Transverse colon (tissue), 4 donors: ENCODE measurements at regions of chr1 and their contacts with region 1.

Region 1: DNA sequence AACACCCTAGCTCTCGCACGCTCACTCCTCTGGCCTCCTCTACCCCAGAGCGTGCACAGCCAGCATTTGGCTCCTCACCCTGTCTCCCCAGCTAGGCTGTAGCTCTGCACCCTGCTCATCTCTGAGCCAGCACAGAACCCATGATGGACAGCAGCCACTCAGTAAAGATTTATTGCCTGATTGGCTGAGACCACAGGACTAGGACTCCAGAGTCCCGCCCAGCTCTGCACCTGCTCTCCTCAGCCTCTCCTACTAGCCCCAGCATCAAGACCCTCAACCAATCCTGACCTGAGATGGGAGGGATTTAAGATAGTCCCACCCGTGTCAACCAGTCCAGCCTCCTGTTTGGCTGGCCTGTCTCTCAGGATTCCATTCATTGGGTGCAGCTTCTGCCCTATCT is 9.3 kb downstream of the C1QB start:
- DNase-seq: peak; percentile 22
- H3K4me3 ChIP-seq: no peak overlapping the region
- H3K27ac ChIP-seq: no peak overlapping the region
- H3K4me1 ChIP-seq: no peaks in the 10 kb centered on the region
- H3K27me3 ChIP-seq: peaks cover 2% of the 10 kb centered on the region
- CTCF ChIP-seq: no peak
- EP300 ChIP-seq: no peak
- POLR2A ChIP-seq: no peak

Region 2: DNA sequence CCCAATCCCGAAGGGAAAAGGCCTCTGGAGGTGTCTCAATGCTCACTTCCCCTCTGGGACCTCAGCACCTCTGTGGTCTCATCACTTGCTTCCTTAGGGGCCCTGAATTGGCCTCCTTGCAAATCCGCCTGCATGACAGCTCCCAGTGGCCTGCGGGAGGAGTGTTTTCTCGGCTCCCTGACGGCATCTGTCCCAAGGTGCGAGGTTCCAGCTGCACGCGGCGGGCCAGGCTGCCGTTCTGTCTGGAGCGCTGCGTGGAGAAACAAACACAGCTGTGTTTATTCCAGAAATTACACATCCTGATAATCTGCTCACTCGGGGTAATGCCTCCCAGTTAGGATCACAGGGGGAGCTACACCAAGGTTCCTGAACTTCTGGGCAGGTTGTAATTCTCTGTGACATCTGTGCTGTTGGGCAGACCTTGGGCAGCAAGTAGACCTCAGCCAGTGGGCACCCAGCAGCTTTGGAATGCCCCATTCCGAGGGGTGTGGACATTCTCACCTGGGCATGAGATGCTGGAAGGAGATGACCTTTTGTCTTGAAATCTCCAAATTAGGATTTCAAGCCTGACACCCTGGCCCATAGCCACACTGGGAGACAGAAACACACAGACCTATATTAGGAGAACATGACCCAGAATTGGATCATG is 66.6 kb after region 1 on chr1:
- in situ Hi-C with region 1: no loop called
- intact Hi-C with region 1: loop called (anchors 2 kb)
- DNase-seq: no peak
- H3K4me3 ChIP-seq: no peak overlapping the region
- H3K27ac ChIP-seq: no peak overlapping the region
- H3K4me1 ChIP-seq: peaks cover 0 to 12% (median 2%) of the 10 kb centered on the region in 4 donors
- H3K27me3 ChIP-seq: no peaks in the 10 kb centered on the region
- CTCF ChIP-seq: no peak
- EP300 ChIP-seq: no peak
- POLR2A ChIP-seq: no peak